ENCODE measurements at regions of chr5 and their contacts with region 1.

Region 1: GRCh38 chr5:10513501-10514442 is 50.1 kb upstream of the ANKRD33B start:
- DNase-seq: peak; percentile 75 to 95
- H3K4me3 ChIP-seq: no peak overlapping the region
- H3K27ac ChIP-seq: peak overlapping the region; percentile 91
- H3K4me1 ChIP-seq: peaks cover 56% of the 10 kb centered on the region
- H3K27me3 ChIP-seq: no peaks in the 10 kb centered on the region
- CTCF ChIP-seq: no peak

Region 2: DNA sequence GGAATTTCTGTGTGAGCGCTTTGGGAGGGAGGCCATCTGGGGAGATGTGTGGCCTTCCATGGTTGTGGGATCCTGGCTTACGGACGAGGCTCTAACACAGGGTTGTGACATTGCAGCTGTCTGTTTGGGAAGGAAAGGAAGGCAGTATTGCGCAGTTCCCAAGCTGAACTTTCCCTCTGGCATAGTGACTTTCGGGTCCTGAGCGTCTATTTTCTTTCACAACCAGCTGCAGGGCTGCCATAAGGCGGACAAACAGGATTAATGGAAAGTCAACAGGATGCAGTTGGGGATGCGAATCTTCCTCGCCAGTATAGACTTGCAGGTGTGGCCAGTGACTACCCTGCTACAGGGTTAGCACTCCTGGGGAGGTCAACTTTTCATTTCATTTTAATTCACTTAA is 237.8 kb before region 1 on chr5:
- CTCF ChIA-PET with region 1: no interaction called
- POLR2A ChIA-PET with region 1: no interaction called
- intact Hi-C with region 1: no loop called
- DNase-seq: no peak
- H3K4me3 ChIP-seq: no peak overlapping the region
- H3K27ac ChIP-seq: no peak overlapping the region
- H3K4me1 ChIP-seq: no peaks in the 10 kb centered on the region
- H3K27me3 ChIP-seq: no peaks in the 10 kb centered on the region
- CTCF ChIP-seq: no peak

Region 3: DNA sequence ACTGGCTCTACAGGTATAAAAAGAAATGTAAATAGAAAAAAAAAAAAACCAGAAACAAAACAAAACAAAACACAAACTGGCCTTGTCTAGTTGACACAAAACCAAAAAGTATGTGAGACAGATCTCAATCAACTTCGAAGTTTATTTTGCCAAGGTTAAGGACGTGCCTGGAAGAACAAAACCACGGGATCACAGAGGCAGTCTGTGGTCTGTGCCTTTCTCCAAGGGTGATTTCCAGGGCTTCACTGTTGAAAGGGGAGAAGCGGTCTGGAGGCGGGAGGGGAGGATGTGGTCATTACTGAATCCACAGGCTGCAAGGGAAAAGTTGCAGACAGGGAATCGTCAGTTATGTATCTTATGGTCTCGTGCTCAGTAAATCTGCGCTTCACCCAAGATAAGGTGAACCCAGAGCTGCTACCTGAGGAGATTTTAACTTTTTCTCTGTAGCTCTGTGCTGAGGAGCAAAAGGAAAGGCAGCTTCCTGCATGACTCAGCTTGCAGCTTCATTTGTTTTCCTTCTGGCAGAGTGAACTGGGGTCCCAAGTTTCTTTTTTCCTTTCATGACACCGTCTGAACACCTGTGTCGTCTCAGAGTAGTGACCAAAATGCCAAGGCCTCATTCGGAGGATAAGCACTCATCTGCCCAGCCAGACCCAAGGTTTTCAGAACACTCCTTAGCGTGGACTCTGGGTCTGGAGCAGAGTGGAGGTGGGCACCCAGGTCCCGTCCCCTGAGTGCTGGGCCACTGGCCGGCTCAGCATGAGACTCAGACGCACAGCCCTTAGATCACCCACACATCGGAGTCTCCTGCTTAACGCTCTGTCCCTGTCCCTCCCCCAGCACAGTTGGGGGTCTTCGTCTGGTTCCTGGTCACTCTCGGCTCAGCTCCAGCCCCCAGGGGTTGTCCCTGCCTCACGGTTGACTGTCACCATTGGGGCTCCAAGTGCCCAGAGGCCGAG is 46.3 kb before region 1 on chr5:
- CTCF ChIA-PET with region 1: no interaction called
- POLR2A ChIA-PET with region 1: interaction called, 6 read pairs
- intact Hi-C with region 1: loop called (anchors 2 kb)
- DNase-seq: peak; percentile 73
- H3K4me3 ChIP-seq: no peak overlapping the region; the same call in 1 of the 2 replicates
- H3K27ac ChIP-seq: peak overlapping the region; percentile 80
- H3K4me1 ChIP-seq: peaks cover 22% of the 10 kb centered on the region
- H3K27me3 ChIP-seq: no peaks in the 10 kb centered on the region
- CTCF ChIP-seq: no peak

Measured in PC-9 (cell line).